Mucosa of descending colon (tissue), 3 donors: ENCODE measurements at regions of chr10 and their contacts with region 1.

Region 1: DNA sequence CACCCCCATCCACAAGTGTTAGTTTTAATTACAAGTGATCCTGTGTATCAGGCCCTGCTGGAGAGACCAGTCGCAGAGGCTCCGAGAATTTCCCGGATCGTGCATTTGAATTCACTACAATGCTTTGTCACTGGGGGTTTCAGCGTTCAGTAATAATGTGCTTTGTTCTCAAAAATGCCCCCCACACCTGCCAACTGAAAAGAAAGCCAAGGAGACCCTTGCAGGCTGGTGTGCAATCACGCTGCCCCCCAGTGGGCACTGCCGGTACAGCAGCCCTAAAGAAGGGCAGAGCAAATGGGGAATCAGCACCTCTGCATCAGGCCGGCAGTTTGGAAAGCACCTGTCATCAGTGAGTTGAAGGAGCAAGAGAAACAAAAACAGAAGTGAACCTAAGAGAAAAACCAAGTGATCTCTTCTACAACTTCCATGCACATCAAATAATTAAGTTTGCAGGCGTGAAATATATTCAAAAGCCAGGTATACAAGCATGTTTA is 177.6 kb downstream of the PARD3 start:
- DNase-seq: peak in 2 of 3 donors; percentile 73 to 85
- ATAC-seq: peak; percentile 74
- H3K4me3 ChIP-seq: no peak overlapping the region
- H3K4me1 ChIP-seq: peaks cover 11% of the 10 kb centered on the region
- CTCF ChIP-seq: peak; percentile 88

Region 2: GRCh38 chr10:33330543-33331378 is 1306.7 kb before region 1 on chr10:
- intact Hi-C with region 1: loop called (anchors 5 kb)
- DNase-seq: peak; percentile 71 to 92 (median 85)
- ATAC-seq: peak; percentile 62
- H3K4me3 ChIP-seq: no peak overlapping the region
- H3K4me1 ChIP-seq: no peaks in the 10 kb centered on the region
- CTCF ChIP-seq: peak; percentile 70